Activated B cell treated with CpG ODN at 0.5 μM for 24 hours (primary cell): ENCODE measurements at regions of chr1 and their contacts with region 1.

Region 1: GRCh38 chr1:161314201-161314981 is at the start of gene SDHC:
- DNase-seq: peak; percentile 83
- ATAC-seq: peak; percentile 97
- H3K4me3 Mint-ChIP-seq: peak within 1 kb of the TSS; percentile 98
- H3K27ac Mint-ChIP-seq: peak within 1 kb of the TSS; percentile 98
- H3K4me1 Mint-ChIP-seq: peaks cover 21% of the 10 kb centered on the region
- H3K27me3 Mint-ChIP-seq: no peaks in the 10 kb centered on the region
- CTCF ChIP-seq: no peak
- total RNA-seq, gene SDHC: 160 and 179 TPM in 2 replicates

Region 2: DNA sequence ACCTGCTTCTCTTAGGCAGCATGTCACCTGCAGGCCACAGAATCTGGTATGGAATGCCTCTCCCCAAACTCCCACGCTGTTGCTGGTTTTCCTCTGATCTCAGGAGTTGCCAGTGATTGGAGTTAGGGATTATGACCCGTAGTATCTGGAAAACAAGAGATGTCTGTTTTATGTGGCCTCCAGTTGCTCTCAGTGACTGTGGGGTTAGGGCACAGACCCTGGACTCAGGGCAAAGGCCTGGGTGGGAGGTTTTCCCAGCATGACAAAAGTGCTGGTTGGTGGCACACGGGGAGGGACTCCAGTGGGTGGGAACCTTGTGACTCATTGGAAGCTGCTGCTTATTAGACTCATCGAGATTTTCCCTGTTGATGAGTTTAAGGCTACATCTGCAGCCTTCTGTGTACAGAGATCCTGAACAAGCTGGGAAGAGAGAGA is 76.3 kb before region 1 on chr1 and contains the start of gene NR1I3:
- CTCF ChIA-PET with region 1: no interaction called
- POLR2A ChIA-PET with region 1: no interaction called
- intact Hi-C with region 1: no loop called
- DNase-seq: no peak
- ATAC-seq: no peak
- H3K4me3 Mint-ChIP-seq: no peak within 1 kb of the TSS
- H3K27ac Mint-ChIP-seq: no peak within 1 kb of the TSS
- H3K4me1 Mint-ChIP-seq: no peaks in the 10 kb centered on the region
- H3K27me3 Mint-ChIP-seq: peaks cover 24% of the 10 kb centered on the region
- CTCF ChIP-seq: no peak
- total RNA-seq, gene NR1I3: 0.15 TPM in 1 of 2 replicates, not detected in the other

Region 3: GRCh38 chr1:161351482-161351881 is 37.1 kb after region 1 on chr1:
- CTCF ChIA-PET with region 1: no interaction called
- POLR2A ChIA-PET with region 1: interaction called, 10 read pairs
- intact Hi-C with region 1: no loop called
- DNase-seq: no peak
- ATAC-seq: no peak
- H3K4me3 Mint-ChIP-seq: no peak overlapping the region
- H3K27ac Mint-ChIP-seq: no peak overlapping the region
- H3K4me1 Mint-ChIP-seq: peaks cover 7% of the 10 kb centered on the region
- H3K27me3 Mint-ChIP-seq: no peaks in the 10 kb centered on the region
- CTCF ChIP-seq: no peak

Region 4: GRCh38 chr1:161440312-161440894 is 126.0 kb after region 1 on chr1:
- CTCF ChIA-PET with region 1: no interaction called
- POLR2A ChIA-PET with region 1: no interaction called
- intact Hi-C with region 1: no loop called
- DNase-seq: peak; percentile 78
- ATAC-seq: peak; percentile 59
- H3K4me3 Mint-ChIP-seq: peak overlapping the region; percentile 88
- H3K27ac Mint-ChIP-seq: peak overlapping the region; percentile 78
- H3K4me1 Mint-ChIP-seq: peaks cover 15% of the 10 kb centered on the region
- H3K27me3 Mint-ChIP-seq: peaks cover 18% of the 10 kb centered on the region
- CTCF ChIP-seq: no peak

Region 5: DNA sequence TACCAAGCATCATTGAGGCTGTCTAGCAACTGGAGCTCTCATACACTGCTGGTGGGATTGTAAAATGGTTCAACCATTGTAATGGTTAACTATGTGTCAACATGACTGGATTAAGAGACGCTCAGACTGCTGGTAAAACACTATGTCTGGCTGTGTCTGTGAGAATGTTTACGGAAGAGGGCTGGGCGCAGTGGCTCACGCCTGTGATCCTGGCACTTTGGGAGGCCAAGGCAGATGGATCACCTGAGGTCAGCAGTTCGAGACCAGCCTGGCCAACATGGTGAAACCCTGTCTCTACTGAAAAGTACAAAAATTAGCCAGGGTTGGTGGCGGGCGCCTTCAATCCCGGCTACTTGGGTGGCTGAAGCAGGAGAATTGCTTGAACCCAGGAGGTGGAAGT is 387.9 kb after region 1 on chr1:
- CTCF ChIA-PET with region 1: no interaction called
- POLR2A ChIA-PET with region 1: no interaction called
- intact Hi-C with region 1: no loop called
- DNase-seq: no peak
- ATAC-seq: no peak
- H3K4me3 Mint-ChIP-seq: no peak overlapping the region
- H3K27ac Mint-ChIP-seq: no peak overlapping the region
- H3K4me1 Mint-ChIP-seq: peaks cover 2% of the 10 kb centered on the region
- H3K27me3 Mint-ChIP-seq: no peaks in the 10 kb centered on the region
- CTCF ChIP-seq: no peak